GM12878 (cell line): ENCODE measurements at regions of chr21 and their contacts with region 1.

Region 1: GRCh38 chr21:15051644-15052458 is 12.9 kb downstream of the NRIP1 start:
- DNase-seq: no peak
- ATAC-seq: peak; percentile 84
- H3K4me3 ChIP-seq: peak overlapping the region; percentile 62
- H3K27ac ChIP-seq: peak overlapping the region; percentile 83
- H3K4me1 ChIP-seq: peaks cover 9% of the 10 kb centered on the region
- H3K27me3 ChIP-seq: no peaks in the 10 kb centered on the region
- CTCF ChIP-seq: no peak
- EP300 ChIP-seq: no peak
- POLR2A ChIP-seq: no peak
- RAD21 ChIP-seq: no peak

Region 2: GRCh38 chr21:14762734-14763694 is 288.8 kb before region 1 on chr21:
- CTCF ChIA-PET with region 1: no interaction called
- POLR2A ChIA-PET with region 1: no interaction called
- RAD21 ChIA-PET with region 1: no interaction called
- SMC1A ChIA-PET with region 1: no interaction called
- in situ Hi-C with region 1: no loop called
- intact Hi-C with region 1: loop called (anchors 5 kb)
- DNase-seq: peak; percentile 82
- ATAC-seq: peak; percentile 97
- H3K4me3 ChIP-seq: peak overlapping the region; percentile 59
- H3K27ac ChIP-seq: peak overlapping the region; percentile 87
- H3K4me1 ChIP-seq: peaks cover 10% of the 10 kb centered on the region
- H3K27me3 ChIP-seq: no peaks in the 10 kb centered on the region
- CTCF ChIP-seq: no peak
- EP300 ChIP-seq: peak; percentile 89 to 98
- POLR2A ChIP-seq: no peak
- RAD21 ChIP-seq: 0 out of 2 replicates have a peak, but pooled peaks have one; percentile 24